ENCODE measurements at regions of chr9 and their contacts with region 1.

Region 1: DNA sequence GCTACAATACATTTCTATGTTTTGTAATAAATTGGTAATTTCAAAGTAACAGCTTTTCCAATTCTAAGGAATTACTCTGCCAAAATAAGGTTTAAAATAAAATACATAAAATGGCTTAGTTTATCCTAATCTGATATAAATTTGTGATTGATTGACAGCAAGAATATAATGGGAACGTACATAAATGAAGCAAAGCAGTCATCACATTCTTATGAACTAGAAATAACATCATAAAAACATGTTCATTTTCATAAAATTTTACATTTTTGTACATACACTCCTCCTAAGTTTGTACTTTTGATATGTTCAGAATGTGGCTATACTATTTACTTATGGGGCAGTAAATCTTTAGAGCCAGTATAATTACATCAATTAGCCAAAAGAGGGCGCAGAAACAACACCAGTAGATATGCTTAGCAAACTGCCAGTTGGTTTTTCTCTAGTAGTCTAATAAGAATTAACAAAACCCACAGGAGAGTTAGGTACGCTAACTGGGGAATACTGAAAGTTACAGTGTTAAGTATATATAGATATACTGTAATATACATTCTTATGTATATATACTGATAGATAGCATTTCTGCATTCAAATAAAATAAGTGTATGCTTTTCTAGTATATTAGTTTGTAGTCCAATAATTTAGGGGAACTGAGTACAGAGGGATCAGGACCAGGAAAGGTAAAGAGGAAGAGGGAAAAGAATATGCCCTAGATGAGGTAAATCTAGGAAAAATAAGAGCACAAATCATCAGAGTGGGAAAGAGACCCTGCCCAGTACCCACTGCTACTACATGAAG is 76.8 kb downstream of the ZDHHC21 start:
- DNase-seq: no peak
- ATAC-seq: peak in 1 of 8 donors; percentile 37
- H3K4me3 ChIP-seq: no peak overlapping the region
- H3K27ac ChIP-seq: no peak overlapping the region
- H3K4me1 ChIP-seq: no peaks in the 10 kb centered on the region
- H3K27me3 ChIP-seq: no peaks in the 10 kb centered on the region
- CTCF ChIP-seq: peak; percentile 30 to 79 (median 70)

Region 2: DNA sequence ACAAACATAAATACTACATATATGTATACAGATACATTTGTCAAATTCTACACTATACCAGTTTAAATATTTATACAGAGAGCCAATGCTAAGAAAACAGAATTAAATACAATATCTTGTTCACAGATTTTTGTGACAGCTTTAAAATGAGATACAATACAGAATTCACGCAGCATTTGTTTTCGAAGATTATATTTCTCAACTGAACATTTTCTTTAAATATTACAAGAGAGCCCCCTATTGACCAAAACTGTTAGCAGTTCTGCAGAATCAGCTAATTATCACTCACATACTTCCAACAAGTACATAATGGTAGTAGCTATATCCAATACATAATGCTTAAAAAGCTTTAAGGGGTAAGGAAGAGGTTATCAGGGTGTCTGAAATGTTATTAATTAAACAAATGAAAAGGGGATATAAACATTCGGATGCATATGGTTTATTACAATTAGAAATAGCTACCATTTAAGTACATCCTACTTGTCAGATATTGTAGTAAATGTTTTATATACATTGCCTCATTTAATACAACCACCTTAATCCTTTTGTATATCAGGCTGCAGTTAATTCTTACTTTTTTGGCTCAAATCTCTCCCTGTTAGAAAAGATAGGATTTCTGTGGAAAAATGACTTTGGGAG is 45.2 kb after region 1 on chr9:
- intact Hi-C with region 1: loop called in 1 of 10 experiments (anchors 2 kb)
- DNase-seq: no peak
- ATAC-seq: no peak
- H3K4me3 ChIP-seq: no peak overlapping the region
- H3K27ac ChIP-seq: no peak overlapping the region
- H3K4me1 ChIP-seq: no peaks in the 10 kb centered on the region
- H3K27me3 ChIP-seq: no peaks in the 10 kb centered on the region
- CTCF ChIP-seq: peak in 8 of 9 donors; percentile 29 to 67 (median 55)

Region 3: GRCh38 chr9:14779566-14780022 is 163.2 kb after region 1 on chr9:
- intact Hi-C with region 1: loop called in 1 of 10 experiments (anchors 10 kb)
- DNase-seq: no peak
- ATAC-seq: no peak
- H3K4me3 ChIP-seq: no peak overlapping the region
- H3K27ac ChIP-seq: no peak overlapping the region
- H3K4me1 ChIP-seq: peaks cover 0 to 12% (median 0%) of the 10 kb centered on the region in 9 donors
- H3K27me3 ChIP-seq: no peaks in the 10 kb centered on the region
- CTCF ChIP-seq: no peak

Region 4: DNA sequence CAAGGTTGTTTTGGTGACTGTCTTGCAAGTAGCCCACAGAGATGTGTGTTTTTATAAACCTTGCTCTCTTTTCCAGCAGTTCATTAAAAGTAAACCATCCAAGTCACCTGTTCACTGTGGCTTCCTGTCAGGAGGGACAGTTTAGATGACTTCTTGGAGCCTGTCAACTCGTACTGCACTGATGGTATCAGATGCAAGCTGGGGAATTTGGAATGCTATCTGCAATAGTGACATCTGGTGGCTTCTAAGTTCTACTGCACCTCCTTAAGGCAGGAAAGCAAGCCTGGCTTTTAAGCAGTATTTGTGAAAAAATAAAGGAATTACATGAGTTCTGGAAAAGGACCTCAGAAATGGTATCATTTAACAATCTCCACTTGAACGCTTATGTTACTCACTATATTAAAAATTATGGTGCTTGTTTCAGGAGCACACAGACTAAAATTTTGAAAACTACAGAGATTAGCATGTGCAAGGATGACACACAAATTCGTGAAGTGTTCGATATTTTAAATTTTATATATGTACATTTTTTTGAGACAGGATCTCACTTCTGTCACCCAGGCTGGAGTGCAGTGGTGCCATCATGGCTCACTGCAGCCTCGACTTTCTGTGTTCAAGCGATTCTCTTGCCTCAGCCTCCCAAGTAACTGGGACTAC is 526.6 kb after region 1 on chr9:
- intact Hi-C with region 1: loop called in 1 of 10 experiments (anchors 5 kb)
- DNase-seq: no peak
- ATAC-seq: peak in 5 of 8 donors; percentile 38 to 75 (median 67)
- H3K4me3 ChIP-seq: no peak overlapping the region
- H3K27ac ChIP-seq: no peak overlapping the region
- H3K4me1 ChIP-seq: peaks cover 0 to 7% (median 0%) of the 10 kb centered on the region in 9 donors
- H3K27me3 ChIP-seq: no peaks in the 10 kb centered on the region
- CTCF ChIP-seq: peak; percentile 44 to 86 (median 79)